Right ventricle myocardium superior (tissue), 1 donor: ENCODE measurements at regions of chr15 and their contacts with region 1.

Region 1: GRCh38 chr15:69272139-69272538 is 26.6 kb upstream of the PAQR5 start:
- DNase-seq: no peak
- ATAC-seq: no peak

Region 2: DNA sequence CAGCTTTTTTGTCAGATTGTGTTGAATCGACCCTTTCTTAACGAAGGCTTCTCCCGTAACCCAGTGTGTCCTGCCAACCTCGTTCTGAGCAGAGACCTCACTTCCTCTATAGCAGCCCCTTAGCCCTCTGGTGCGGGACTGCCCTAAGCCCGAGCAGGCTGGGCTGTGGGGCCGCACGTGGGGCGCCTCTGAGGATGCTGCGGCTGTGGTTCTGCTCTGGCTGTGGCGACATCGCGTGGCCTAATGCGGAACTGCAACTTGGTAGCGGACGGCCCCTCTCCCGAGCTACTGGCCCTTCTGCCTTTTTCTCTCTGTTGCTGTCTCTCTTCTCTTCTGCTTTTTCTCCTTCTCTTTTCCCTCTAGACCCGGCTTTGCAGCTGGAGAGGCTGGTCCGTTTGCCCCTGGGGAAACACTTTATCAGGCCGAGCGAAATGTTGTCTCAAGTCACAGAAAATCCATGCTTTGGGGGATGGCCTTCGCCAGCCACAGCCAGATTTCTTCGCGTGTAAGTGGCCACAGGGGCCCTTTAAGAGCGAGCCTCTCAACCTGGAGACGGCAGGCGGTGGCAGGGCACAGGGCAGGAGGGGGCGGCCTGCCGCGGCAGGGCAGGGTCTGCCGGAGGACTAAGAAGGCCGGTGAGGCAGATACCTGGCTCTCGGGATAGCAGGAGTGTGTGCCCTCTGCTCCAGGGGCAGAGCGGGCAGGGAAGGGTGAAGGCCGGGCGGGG is 122.6 kb after region 1 on chr15:
- intact Hi-C with region 1: loop called (anchors 10 kb)
- DNase-seq: peak; percentile 90
- ATAC-seq: peak; percentile 92